Naive thymus-derived CD4-positive, alpha-beta T cell (primary cell): ENCODE measurements at regions of chr12 and their contacts with region 1.

Region 1: GRCh38 chr12:9797722-9798619 is 29.3 kb upstream of the KLRF1 start:
- DNase-seq: peak in 8 of 9 donors; percentile 56 to 81 (median 73)
- ATAC-seq: peak; percentile 95
- H3K4me3 ChIP-seq: no peak overlapping the region
- H3K4me3 Mint-ChIP-seq: peak overlapping the region in 9 of 10 donors; percentile 6 to 53 (median 42)
- H3K27ac ChIP-seq: peak overlapping the region; percentile 64
- H3K27ac Mint-ChIP-seq: peak overlapping the region; percentile 39 to 89 (median 76)
- H3K4me1 ChIP-seq: peaks cover 38 to 44% of the 10 kb centered on the region in 2 donors
- H3K4me1 Mint-ChIP-seq: peaks cover 40 to 54% (median 50%) of the 10 kb centered on the region in 7 donors
- H3K27me3 ChIP-seq: no peaks in the 10 kb centered on the region
- H3K27me3 Mint-ChIP-seq: peaks cover 0 to 15% (median 0%) of the 10 kb centered on the region in 5 donors

Region 2: DNA sequence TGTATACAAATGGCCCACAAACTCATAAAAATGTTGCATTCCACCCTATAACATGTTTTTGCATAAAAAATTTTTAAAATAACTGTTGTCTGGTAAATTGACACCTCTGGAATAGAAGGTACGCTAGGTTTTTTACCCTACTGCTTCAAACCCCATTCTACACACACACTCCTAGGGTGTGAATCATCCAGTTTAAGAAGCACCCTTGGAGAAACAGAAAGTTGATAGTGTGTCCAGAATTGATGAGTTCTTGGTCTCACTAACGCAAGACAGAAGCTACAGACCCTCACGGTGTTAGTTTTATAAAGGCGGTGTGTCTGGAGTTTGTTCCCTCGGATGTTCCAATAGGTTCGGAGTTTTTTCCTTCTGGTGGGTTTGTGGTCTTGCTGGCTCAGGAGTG is 348.8 kb before region 1 on chr12:
- CTCF ChIA-PET with region 1: no interaction called
- POLR2A ChIA-PET with region 1: no interaction called
- intact Hi-C with region 1: loop called in 1 of 2 experiments (anchors 5 kb)
- DNase-seq: no peak
- ATAC-seq: no peak
- H3K4me3 ChIP-seq: peak overlapping the region; percentile 79
- H3K4me3 Mint-ChIP-seq: peak overlapping the region; percentile 94 to 100 (median 96)
- H3K27ac ChIP-seq: no peak overlapping the region
- H3K27ac Mint-ChIP-seq: peak overlapping the region in 4 of 9 donors; percentile 68 to 96 (median 84)
- H3K4me1 ChIP-seq: peaks cover 0 to 3% of the 10 kb centered on the region in 2 donors
- H3K4me1 Mint-ChIP-seq: peaks cover 15 to 29% (median 21%) of the 10 kb centered on the region in 7 donors
- H3K27me3 ChIP-seq: no peaks in the 10 kb centered on the region
- H3K27me3 Mint-ChIP-seq: peaks cover 0 to 9% (median 0%) of the 10 kb centered on the region in 5 donors

Region 3: DNA sequence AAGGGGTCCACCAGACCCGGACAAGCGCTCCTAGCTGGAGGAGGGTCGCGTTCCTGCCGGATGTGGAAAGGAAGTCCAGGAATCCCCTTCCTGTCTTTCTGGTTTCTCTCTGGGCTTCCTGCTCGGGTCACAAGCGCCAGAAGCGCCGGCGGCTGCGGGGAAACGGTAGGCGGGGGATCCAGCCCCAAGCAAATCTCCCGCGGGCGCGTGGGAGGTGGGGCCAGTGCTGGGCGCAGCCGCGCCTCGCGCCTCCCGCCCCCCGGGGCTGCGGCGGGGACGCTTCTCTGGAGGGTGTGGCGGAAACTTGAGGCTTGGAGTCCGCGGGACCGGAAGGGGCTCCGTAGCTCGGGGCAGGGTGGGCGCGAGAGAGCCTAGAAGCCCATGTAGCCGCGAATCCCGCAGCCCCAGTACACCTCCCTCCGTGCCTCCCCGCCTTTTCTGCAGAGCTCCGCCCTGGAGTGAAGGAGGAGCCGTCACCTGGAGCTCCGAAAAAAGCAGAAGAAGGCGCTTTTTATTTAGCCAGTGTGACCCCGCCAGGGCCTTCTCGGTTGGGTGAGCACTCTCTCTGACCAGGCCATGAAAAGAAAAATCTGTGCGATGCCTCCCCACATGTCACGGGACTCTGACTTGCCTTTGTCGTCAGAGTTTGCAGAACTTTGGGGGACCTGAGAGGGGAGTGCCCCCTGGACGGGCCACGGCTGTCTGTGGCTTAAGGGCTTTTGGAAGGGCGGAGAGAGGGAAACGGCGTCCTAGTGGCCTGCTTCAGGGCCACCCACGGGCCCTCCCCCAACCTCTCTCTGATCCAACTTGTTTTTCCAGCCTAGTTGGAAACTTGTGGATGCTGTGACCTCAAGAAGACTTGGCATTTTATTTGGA is 149.9 kb before region 1 on chr12:
- CTCF ChIA-PET with region 1: interaction called, 12 read pairs
- POLR2A ChIA-PET with region 1: interaction called, 5 read pairs
- intact Hi-C with region 1: loop called in 1 of 2 experiments (anchors 1 kb)
- DNase-seq: peak; percentile 77 to 97 (median 92)
- ATAC-seq: peak; percentile 81
- H3K4me3 ChIP-seq: peak overlapping the region; percentile 67
- H3K4me3 Mint-ChIP-seq: peak overlapping the region; percentile 93 to 100 (median 98)
- H3K27ac ChIP-seq: peak overlapping the region; percentile 92
- H3K27ac Mint-ChIP-seq: peak overlapping the region; percentile 92 to 100 (median 98)
- H3K4me1 ChIP-seq: peaks cover 29 to 42% of the 10 kb centered on the region in 2 donors
- H3K4me1 Mint-ChIP-seq: peaks cover 32 to 65% (median 60%) of the 10 kb centered on the region in 7 donors
- H3K27me3 ChIP-seq: no peaks in the 10 kb centered on the region
- H3K27me3 Mint-ChIP-seq: peaks cover 0 to 5% (median 0%) of the 10 kb centered on the region in 5 donors

Region 4: DNA sequence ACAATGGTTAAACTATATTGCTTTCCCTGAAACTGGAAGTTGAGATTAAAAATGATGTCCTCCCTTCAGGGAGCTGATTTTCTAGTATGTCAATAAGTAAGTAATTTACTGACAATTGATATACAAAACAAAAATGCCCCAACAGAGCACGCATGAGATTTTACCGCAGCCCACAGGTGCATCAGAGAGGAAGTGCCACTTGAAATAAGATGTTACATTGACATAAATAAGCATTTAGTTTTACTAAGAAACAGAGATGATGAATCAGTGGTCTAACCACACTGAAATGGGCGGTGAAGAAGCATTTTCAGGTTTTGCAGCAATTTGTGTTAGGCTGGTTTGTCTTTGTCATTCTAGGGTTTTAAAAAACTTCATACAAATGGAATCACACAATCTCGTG is 56.2 kb before region 1 on chr12:
- CTCF ChIA-PET with region 1: interaction called, 616 read pairs
- POLR2A ChIA-PET with region 1: interaction called, 433 read pairs
- intact Hi-C with region 1: loop called in 1 of 2 experiments (anchors 1 kb)
- DNase-seq: peak in 8 of 9 donors; percentile 63 to 95 (median 90)
- ATAC-seq: peak; percentile 84
- H3K4me3 ChIP-seq: peak overlapping the region; percentile 15
- H3K4me3 Mint-ChIP-seq: peak overlapping the region; percentile 22 to 95 (median 83)
- H3K27ac ChIP-seq: peak overlapping the region; percentile 76
- H3K27ac Mint-ChIP-seq: peak overlapping the region; percentile 89 to 100 (median 98)
- H3K4me1 ChIP-seq: peaks cover 55 to 59% of the 10 kb centered on the region in 2 donors
- H3K4me1 Mint-ChIP-seq: peaks cover 51 to 81% (median 71%) of the 10 kb centered on the region in 7 donors
- H3K27me3 ChIP-seq: no peaks in the 10 kb centered on the region
- H3K27me3 Mint-ChIP-seq: peaks cover 0 to 6% (median 0%) of the 10 kb centered on the region in 5 donors

Region 5: GRCh38 chr12:9773216-9773877 is 24.6 kb before region 1 on chr12:
- CTCF ChIA-PET with region 1: interaction called, 10 read pairs
- POLR2A ChIA-PET with region 1: interaction called, 7 read pairs
- intact Hi-C with region 1: loop called in 1 of 2 experiments (anchors 1 kb)
- DNase-seq: peak in 4 of 9 donors; percentile 41 to 70 (median 63)
- ATAC-seq: peak; percentile 78
- H3K4me3 ChIP-seq: peak overlapping the region; percentile 29
- H3K4me3 Mint-ChIP-seq: peak overlapping the region; percentile 4 to 78 (median 70)
- H3K27ac ChIP-seq: no peak overlapping the region
- H3K27ac Mint-ChIP-seq: peak overlapping the region; percentile 36 to 87 (median 73)
- H3K4me1 ChIP-seq: peaks cover 40 to 46% of the 10 kb centered on the region in 2 donors
- H3K4me1 Mint-ChIP-seq: peaks cover 46 to 91% (median 81%) of the 10 kb centered on the region in 7 donors
- H3K27me3 ChIP-seq: no peaks in the 10 kb centered on the region
- H3K27me3 Mint-ChIP-seq: no peaks in the 10 kb centered on the region

Region 6: GRCh38 chr12:9813821-9814809 is 16.1 kb after region 1 on chr12:
- CTCF ChIA-PET with region 1: interaction called, 17 read pairs
- POLR2A ChIA-PET with region 1: interaction called, 5 read pairs
- intact Hi-C with region 1: loop called in 1 of 2 experiments (anchors 1 kb)
- DNase-seq: peak; percentile 85 to 98 (median 94)
- ATAC-seq: peak; percentile 99
- H3K4me3 ChIP-seq: peak overlapping the region; percentile 70
- H3K4me3 Mint-ChIP-seq: peak overlapping the region; percentile 85 to 97 (median 92)
- H3K27ac ChIP-seq: peak overlapping the region; percentile 71
- H3K27ac Mint-ChIP-seq: peak overlapping the region; percentile 75 to 97 (median 90)
- H3K4me1 ChIP-seq: no peaks in the 10 kb centered on the region
- H3K4me1 Mint-ChIP-seq: peaks cover 9 to 30% (median 14%) of the 10 kb centered on the region in 7 donors
- H3K27me3 ChIP-seq: no peaks in the 10 kb centered on the region
- H3K27me3 Mint-ChIP-seq: peaks cover 0 to 35% (median 5%) of the 10 kb centered on the region in 5 donors

Region 7: GRCh38 chr12:9856894-9857293 is 58.9 kb after region 1 on chr12:
- CTCF ChIA-PET with region 1: no interaction called
- POLR2A ChIA-PET with region 1: no interaction called
- intact Hi-C with region 1: no loop called
- DNase-seq: no peak
- ATAC-seq: no peak
- H3K4me3 ChIP-seq: no peak overlapping the region
- H3K4me3 Mint-ChIP-seq: no peak overlapping the region
- H3K27ac ChIP-seq: no peak overlapping the region
- H3K27ac Mint-ChIP-seq: no peak overlapping the region
- H3K4me1 ChIP-seq: peaks cover 7 to 11% of the 10 kb centered on the region in 2 donors
- H3K4me1 Mint-ChIP-seq: peaks cover 26 to 89% (median 66%) of the 10 kb centered on the region in 7 donors
- H3K27me3 ChIP-seq: no peaks in the 10 kb centered on the region
- H3K27me3 Mint-ChIP-seq: no peaks in the 10 kb centered on the region

Region 8: DNA sequence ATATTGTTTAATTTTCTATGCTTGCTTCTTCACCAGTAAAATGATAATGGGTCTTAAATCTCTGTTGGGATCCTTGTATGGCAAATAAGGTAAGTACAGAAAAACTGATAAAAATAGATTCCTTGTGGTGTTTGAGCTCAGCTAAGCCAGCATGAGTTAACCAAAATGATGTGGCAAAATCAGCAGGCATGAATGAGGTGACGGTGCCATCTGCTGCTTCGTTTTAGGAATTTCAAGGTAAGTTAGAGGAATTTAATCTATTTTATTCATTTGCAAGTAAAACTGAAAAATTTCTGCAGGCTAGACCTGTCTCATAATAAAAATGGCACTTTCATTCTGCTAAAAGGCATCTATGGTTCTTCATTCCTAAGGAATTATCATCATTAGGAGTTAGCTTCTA is 342.0 kb after region 1 on chr12:
- CTCF ChIA-PET with region 1: interaction called, 7 read pairs
- POLR2A ChIA-PET with region 1: no interaction called
- intact Hi-C with region 1: loop called (anchors 1 to 2 kb)
- DNase-seq: peak in 7 of 9 donors; percentile 26 to 66 (median 49)
- ATAC-seq: peak; percentile 72
- H3K4me3 ChIP-seq: no peak overlapping the region
- H3K4me3 Mint-ChIP-seq: no peak overlapping the region
- H3K27ac ChIP-seq: no peak overlapping the region
- H3K27ac Mint-ChIP-seq: no peak overlapping the region
- H3K4me1 ChIP-seq: no peaks in the 10 kb centered on the region
- H3K4me1 Mint-ChIP-seq: peaks cover 0 to 3% (median 0%) of the 10 kb centered on the region in 7 donors
- H3K27me3 ChIP-seq: no peaks in the 10 kb centered on the region
- H3K27me3 Mint-ChIP-seq: peaks cover 0 to 51% (median 0%) of the 10 kb centered on the region in 5 donors